PC-3 (cell line): ENCODE measurements at regions of chrX and their contacts with region 1.

Region 1: GRCh38 chrX:100685284-100685996 is 41.4 kb downstream of the SRPX2 start:
- DNase-seq: peak; percentile 86
- ATAC-seq: peak; percentile 85
- H3K4me3 ChIP-seq: no peak overlapping the region
- H3K27ac ChIP-seq: no peak overlapping the region
- H3K4me1 ChIP-seq: peaks cover 12% of the 10 kb centered on the region
- H3K27me3 ChIP-seq: no peaks in the 10 kb centered on the region
- CTCF ChIP-seq: peak; percentile 96

Region 2: DNA sequence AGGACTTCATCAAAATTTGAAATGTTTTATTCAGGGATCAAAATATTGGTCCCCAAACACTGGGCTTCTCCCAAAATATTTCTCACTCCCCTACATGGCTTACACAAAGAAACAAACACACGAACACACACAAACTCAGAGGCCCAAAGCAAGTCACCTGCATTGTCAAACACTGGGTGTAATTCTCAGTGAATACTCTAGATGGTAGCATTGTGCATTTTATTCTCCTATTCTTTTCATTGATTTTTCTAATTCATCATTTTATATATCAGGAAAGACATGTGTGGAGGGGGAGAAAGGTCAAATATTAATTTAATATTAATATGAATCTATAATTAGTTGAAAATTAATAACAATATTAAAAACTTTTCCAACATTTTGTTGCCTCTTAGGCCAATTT is 173.0 kb before region 1 on chrX:
- CTCF ChIA-PET with region 1: no interaction called
- POLR2A ChIA-PET with region 1: no interaction called
- intact Hi-C with region 1: loop called (anchors 10 kb)
- DNase-seq: peak; percentile 40
- ATAC-seq: no peak; the same call in 1 of the 2 replicates
- H3K4me3 ChIP-seq: no peak overlapping the region
- H3K27ac ChIP-seq: no peak overlapping the region
- H3K4me1 ChIP-seq: peaks cover under 1% of the 10 kb centered on the region; the same call in 1 of the 2 replicates
- H3K27me3 ChIP-seq: no peaks in the 10 kb centered on the region
- CTCF ChIP-seq: peak; percentile 55

Region 3: GRCh38 chrX:100674705-100675104 is 10.7 kb before region 1 on chrX:
- CTCF ChIA-PET with region 1: interaction called, 20 read pairs
- POLR2A ChIA-PET with region 1: no interaction called
- intact Hi-C with region 1: loop called (anchors 2 kb)
- DNase-seq: no peak
- ATAC-seq: no peak
- H3K4me3 ChIP-seq: no peak overlapping the region
- H3K27ac ChIP-seq: no peak overlapping the region
- H3K4me1 ChIP-seq: peaks cover 28% of the 10 kb centered on the region
- H3K27me3 ChIP-seq: no peaks in the 10 kb centered on the region
- CTCF ChIP-seq: no peak